PC-9 (cell line): ENCODE measurements at regions of chr9 and their contacts with region 1.

Region 1: GRCh38 chr9:123637945-123638634 is 282.1 kb downstream of the CRB2 start:
- DNase-seq: no peak
- H3K4me3 ChIP-seq: no peak overlapping the region
- H3K27ac ChIP-seq: no peak overlapping the region
- H3K4me1 ChIP-seq: no peaks in the 10 kb centered on the region
- H3K27me3 ChIP-seq: no peaks in the 10 kb centered on the region
- CTCF ChIP-seq: no peak

Region 2: GRCh38 chr9:123686131-123686828 is 48.2 kb after region 1 on chr9:
- CTCF ChIA-PET with region 1: no interaction called
- POLR2A ChIA-PET with region 1: no interaction called
- intact Hi-C with region 1: loop called (anchors 1 kb)
- DNase-seq: peak; percentile 36 to 49
- H3K4me3 ChIP-seq: no peak overlapping the region
- H3K27ac ChIP-seq: no peak overlapping the region
- H3K4me1 ChIP-seq: peaks cover 12% of the 10 kb centered on the region
- H3K27me3 ChIP-seq: no peaks in the 10 kb centered on the region
- CTCF ChIP-seq: no peak

Region 3: GRCh38 chr9:123716339-123716945 is 78.4 kb after region 1 on chr9:
- CTCF ChIA-PET with region 1: no interaction called
- POLR2A ChIA-PET with region 1: interaction called, 15 read pairs
- intact Hi-C with region 1: no loop called
- DNase-seq: no peak
- H3K4me3 ChIP-seq: no peak overlapping the region
- H3K27ac ChIP-seq: no peak overlapping the region
- H3K4me1 ChIP-seq: no peaks in the 10 kb centered on the region
- H3K27me3 ChIP-seq: no peaks in the 10 kb centered on the region
- CTCF ChIP-seq: no peak